ENCODE measurements at regions of chr10 and their contacts with region 1.

Region 1: GRCh38 chr10:93515071-93516005 is 18.9 kb downstream of the CEP55 start:
- DNase-seq: no peak
- ATAC-seq: no peak
- H3K4me3 ChIP-seq: no peak overlapping the region
- H3K27ac ChIP-seq: no peak overlapping the region
- H3K4me1 ChIP-seq: no peaks in the 10 kb centered on the region
- H3K27me3 ChIP-seq: no peaks in the 10 kb centered on the region
- CTCF ChIP-seq: no peak
- EP300 ChIP-seq: no peak
- POLR2A ChIP-seq: no peak
- RAD21 ChIP-seq: no peak

Region 2: DNA sequence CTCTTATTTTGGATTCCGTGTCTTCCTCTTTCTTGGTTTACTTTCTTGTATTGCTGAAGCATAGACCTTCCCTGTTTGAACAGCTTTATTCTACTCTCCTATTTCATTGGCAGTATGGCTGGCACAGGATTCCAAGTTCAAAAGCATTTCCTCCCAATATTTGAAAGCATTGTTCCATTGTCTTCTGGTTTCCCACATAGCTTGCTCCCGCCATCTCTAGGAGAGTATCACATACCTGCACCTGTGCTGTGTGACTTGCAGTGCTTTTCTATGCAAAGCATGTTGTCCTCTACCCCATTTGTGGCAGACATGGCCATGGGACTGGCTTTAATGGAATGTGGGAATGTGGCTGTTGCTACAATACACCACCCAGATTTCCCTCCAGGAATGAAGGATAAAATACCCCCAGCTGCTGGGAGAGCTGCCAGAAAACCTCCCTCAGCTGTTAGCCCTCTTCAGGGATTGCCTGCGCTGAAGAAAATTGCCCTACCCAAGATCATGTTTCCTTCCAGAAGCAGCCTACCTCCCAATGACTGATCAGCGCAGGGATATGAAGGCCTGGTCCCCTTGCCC is 26.3 kb before region 1 on chr10:
- CTCF ChIA-PET with region 1: interaction called, 32 read pairs
- POLR2A ChIA-PET with region 1: no interaction called
- RAD21 ChIA-PET with region 1: interaction called, 4 read pairs
- SMC1A ChIA-PET with region 1: interaction called, 6 read pairs
- in situ Hi-C with region 1: no loop called
- intact Hi-C with region 1: no loop called
- DNase-seq: no peak
- ATAC-seq: no peak
- H3K4me3 ChIP-seq: no peak overlapping the region
- H3K27ac ChIP-seq: no peak overlapping the region
- H3K4me1 ChIP-seq: no peaks in the 10 kb centered on the region
- H3K27me3 ChIP-seq: 0 out of 4 replicates have a peak, but pooled peaks cover 0 to 4% of the 10 kb centered on the region in 2 experiments
- CTCF ChIP-seq: no peak
- EP300 ChIP-seq: no peak
- POLR2A ChIP-seq: no peak
- RAD21 ChIP-seq: no peak

Measured in GM12878 (cell line).